ENCODE measurements at regions of chr2 and their contacts with region 1.

Region 1: DNA sequence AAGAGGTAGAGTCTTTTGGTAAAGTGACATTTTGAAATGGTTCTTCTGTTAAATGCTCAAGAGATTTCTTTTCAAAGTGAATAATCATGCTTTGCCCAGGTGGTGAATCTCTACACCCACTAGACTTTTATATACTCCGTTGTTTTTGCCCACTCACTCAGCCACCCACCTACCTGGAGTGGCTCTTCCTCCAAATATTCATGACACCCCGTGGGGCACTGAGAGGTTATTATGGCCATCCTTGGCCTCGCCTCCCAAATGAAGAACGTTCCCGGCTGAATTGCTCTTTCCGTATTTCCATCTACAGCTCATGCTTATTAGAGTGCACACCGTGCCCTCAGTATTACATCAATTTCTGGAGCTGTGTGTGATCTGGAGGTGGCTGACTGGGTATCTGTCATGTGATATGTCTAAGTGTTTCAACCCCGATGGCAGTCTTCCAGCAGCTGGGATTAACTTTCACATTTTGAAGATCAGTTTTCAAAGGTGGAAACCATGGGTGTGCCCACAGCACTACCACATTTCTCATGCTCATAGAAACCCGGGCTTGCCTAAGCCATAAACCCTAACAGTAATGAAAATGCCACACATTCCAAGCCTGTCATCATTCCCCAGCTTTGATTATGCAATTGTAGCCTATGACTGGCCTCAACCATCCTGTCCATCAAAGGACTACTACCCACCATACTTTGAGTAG is 406.6 kb upstream of the MMADHC start:
- DNase-seq: peak; percentile 83
- H3K4me3 Mint-ChIP-seq: peak overlapping the region; percentile 20
- H3K27ac Mint-ChIP-seq: peak overlapping the region; percentile 79
- H3K4me1 Mint-ChIP-seq: peaks cover 49% of the 10 kb centered on the region
- H3K27me3 Mint-ChIP-seq: no peaks in the 10 kb centered on the region
- CTCF ChIP-seq: no peak

Region 2: DNA sequence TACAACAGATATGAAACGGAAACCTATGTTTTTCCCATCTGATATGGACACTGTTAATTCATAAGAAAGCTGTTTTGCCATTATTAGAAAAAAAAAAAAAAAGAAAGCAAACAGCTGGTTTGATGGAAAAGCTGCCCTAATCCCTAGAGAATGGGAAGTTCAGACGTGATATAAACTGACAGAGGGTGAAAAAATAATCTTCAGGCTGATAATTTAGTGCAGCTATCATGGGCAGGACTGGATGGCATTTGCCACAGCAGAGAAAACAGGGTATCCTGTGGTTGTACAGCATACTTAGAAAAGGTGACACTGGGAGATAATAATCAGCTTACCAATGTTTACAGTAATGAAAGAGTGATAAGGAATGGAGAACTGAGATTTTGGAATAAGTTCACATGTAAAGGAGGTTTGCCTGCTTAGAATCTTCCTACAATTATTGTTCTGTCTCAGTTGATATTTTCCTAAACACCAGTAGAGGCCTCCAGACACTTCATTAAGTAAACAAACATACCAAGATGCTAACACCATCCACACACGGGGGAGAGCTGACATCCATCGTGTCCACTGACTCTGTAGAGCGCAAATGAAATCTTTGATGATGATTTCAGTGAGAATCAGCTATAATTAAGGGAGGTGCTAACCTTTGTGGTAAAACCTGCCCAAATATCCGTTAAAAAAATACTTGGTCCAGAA is 195.0 kb before region 1 on chr2:
- CTCF ChIA-PET with region 1: no interaction called
- intact Hi-C with region 1: loop called (anchors 5 kb)
- DNase-seq: peak; percentile 6
- H3K4me3 Mint-ChIP-seq: no peak overlapping the region
- H3K27ac Mint-ChIP-seq: no peak overlapping the region
- H3K4me1 Mint-ChIP-seq: peaks cover 11% of the 10 kb centered on the region
- H3K27me3 Mint-ChIP-seq: no peaks in the 10 kb centered on the region
- CTCF ChIP-seq: no peak

Region 3: GRCh38 chr2:149816756-149817551 is 177.3 kb before region 1 on chr2:
- CTCF ChIA-PET with region 1: interaction called, 3 read pairs
- intact Hi-C with region 1: loop called (anchors 5 kb)
- DNase-seq: no peak
- H3K4me3 Mint-ChIP-seq: no peak overlapping the region
- H3K27ac Mint-ChIP-seq: no peak overlapping the region
- H3K4me1 Mint-ChIP-seq: peaks cover 30% of the 10 kb centered on the region
- H3K27me3 Mint-ChIP-seq: no peaks in the 10 kb centered on the region
- CTCF ChIP-seq: no peak

Region 4: GRCh38 chr2:149877913-149878312 is 116.3 kb before region 1 on chr2:
- CTCF ChIA-PET with region 1: no interaction called
- intact Hi-C with region 1: loop called (anchors 5 kb)
- DNase-seq: peak; percentile 60
- H3K4me3 Mint-ChIP-seq: peak overlapping the region; percentile 23
- H3K27ac Mint-ChIP-seq: peak overlapping the region; percentile 92
- H3K4me1 Mint-ChIP-seq: peaks cover 40% of the 10 kb centered on the region
- H3K27me3 Mint-ChIP-seq: no peaks in the 10 kb centered on the region
- CTCF ChIP-seq: no peak

Region 5: GRCh38 chr2:150143087-150143536 is 148.9 kb after region 1 on chr2:
- CTCF ChIA-PET with region 1: interaction called, 3 read pairs
- intact Hi-C with region 1: loop called (anchors 2 kb)
- DNase-seq: peak; percentile 30
- H3K4me3 Mint-ChIP-seq: peak overlapping the region; percentile 50
- H3K27ac Mint-ChIP-seq: peak overlapping the region; percentile 90
- H3K4me1 Mint-ChIP-seq: peaks cover 66% of the 10 kb centered on the region
- H3K27me3 Mint-ChIP-seq: no peaks in the 10 kb centered on the region
- CTCF ChIP-seq: no peak

Region 6: GRCh38 chr2:150478200-150478974 is 484.2 kb after region 1 on chr2:
- CTCF ChIA-PET with region 1: no interaction called
- intact Hi-C with region 1: loop called (anchors 2 kb)
- DNase-seq: no peak
- H3K4me3 Mint-ChIP-seq: peak overlapping the region; percentile 94
- H3K27ac Mint-ChIP-seq: peak overlapping the region; percentile 94
- H3K4me1 Mint-ChIP-seq: peaks cover 72% of the 10 kb centered on the region
- H3K27me3 Mint-ChIP-seq: no peaks in the 10 kb centered on the region
- CTCF ChIP-seq: no peak

Region 7: GRCh38 chr2:150610671-150611279 is 616.6 kb after region 1 on chr2:
- CTCF ChIA-PET with region 1: no interaction called
- intact Hi-C with region 1: loop called (anchors 5 kb)
- DNase-seq: peak; percentile 64
- H3K4me3 Mint-ChIP-seq: no peak overlapping the region
- H3K27ac Mint-ChIP-seq: no peak overlapping the region
- H3K4me1 Mint-ChIP-seq: peaks cover 23% of the 10 kb centered on the region
- H3K27me3 Mint-ChIP-seq: no peaks in the 10 kb centered on the region
- CTCF ChIP-seq: peak; percentile 66